ENCODE measurements at regions of chr3 and their contacts with region 1.

Region 1: DNA sequence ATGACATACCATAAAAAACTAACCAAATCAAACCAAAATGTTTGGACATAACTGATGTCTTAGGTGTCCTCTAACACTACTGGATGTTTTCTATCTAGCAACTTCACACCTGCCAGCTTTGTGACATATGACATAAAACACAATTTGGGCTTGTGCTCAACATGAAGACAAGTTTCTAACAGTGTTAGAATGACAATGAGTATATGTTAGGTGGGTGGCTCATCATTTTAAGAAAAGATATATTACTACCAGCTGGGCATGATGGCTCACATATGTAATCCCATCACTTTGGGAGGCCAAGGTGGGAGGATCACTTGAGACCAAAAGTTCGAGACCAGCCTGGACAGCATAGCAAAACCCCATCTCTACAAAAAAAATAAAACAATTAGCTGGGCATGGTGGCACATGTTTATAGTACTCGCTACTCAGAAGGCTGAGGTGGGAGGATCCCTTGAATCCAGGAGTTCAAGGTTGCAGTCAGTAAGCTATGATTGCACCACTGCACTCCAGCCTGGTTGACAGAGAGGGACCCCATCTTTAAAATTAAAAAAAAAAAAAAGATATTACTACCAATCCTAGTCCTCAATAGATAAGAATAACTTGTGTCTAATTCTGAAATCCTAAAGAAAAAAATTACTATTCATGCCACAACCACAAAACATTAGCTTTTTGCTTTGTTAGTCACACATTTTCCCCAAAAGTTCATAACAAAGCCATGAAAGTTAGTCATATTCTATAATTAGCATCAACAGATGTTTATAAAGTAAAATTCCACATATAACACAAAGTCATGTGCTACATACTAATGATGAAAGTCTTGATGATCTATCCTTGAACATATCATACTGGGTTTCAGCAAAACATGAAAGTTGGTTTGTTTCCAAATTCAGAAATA is 59.9 kb downstream of the LRRFIP2 start:
- DNase-seq: no peak
- H3K4me3 Mint-ChIP-seq: no peak overlapping the region
- H3K27ac Mint-ChIP-seq: no peak overlapping the region
- H3K4me1 Mint-ChIP-seq: peaks cover 19% of the 10 kb centered on the region
- H3K27me3 Mint-ChIP-seq: no peaks in the 10 kb centered on the region

Region 2: DNA sequence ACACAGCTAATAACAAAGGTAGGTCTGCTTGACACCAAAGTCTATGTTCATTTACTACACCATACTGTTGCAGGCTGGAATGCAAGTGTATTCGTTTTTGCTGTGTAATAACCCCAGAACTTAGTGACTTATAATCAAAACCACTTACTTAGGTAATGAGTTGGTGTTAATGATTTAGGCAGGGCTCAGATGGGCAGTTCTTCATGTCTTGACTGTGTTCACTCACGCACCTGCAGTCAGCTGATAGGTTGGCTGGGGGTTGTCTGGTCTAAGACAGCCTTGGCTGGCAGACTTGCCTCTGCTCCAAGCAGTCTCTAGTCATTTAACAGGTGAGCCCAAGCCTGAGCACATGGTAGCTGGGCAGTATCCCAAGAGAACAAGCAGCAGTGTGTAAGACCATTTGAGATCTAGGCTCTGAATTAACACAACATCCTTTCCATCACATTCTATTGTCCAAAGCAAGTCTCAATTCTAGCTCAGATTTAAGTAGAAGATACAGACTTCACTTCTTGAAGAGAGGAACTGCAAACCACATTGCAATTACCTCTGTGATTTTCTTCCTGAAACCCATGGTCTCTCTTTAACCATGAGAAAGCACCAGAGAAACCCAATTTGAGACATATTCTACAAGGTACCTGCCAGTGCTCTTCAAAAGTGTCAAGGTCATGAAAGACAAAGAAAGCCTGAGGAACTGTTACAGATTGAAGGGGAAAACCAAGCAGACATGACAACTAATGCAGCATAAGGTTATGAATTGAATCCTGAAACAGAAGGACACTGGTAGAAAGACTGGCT is 336.9 kb before region 1 on chr3:
- CTCF ChIA-PET with region 1: no interaction called
- POLR2A ChIA-PET with region 1: no interaction called
- intact Hi-C with region 1: no loop called
- DNase-seq: no peak
- H3K4me3 Mint-ChIP-seq: no peak overlapping the region
- H3K27ac Mint-ChIP-seq: no peak overlapping the region
- H3K4me1 Mint-ChIP-seq: no peaks in the 10 kb centered on the region
- H3K27me3 Mint-ChIP-seq: peaks cover 8% of the 10 kb centered on the region

Region 3: DNA sequence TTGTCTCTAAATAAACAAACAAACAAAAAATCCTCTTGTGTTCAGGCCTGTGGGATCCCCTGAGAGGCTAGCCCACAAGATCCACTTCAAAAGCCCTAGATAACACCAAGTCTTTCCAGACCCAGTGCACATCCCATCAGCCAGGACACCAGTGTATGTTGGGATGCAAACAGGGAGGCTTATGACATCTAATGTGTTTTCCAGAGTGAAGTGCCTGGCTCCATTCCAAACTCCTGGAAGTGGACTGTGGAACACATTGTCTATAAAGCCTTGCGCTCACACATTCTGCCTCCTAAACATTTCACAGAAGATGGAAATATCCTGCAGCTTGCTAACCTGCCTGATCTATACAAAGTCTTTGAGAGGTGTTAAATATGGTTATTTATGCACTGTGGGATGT is 64.2 kb before region 1 on chr3:
- CTCF ChIA-PET with region 1: no interaction called
- POLR2A ChIA-PET with region 1: no interaction called
- intact Hi-C with region 1: no loop called
- DNase-seq: no peak
- H3K4me3 Mint-ChIP-seq: no peak overlapping the region
- H3K27ac Mint-ChIP-seq: no peak overlapping the region
- H3K4me1 Mint-ChIP-seq: peaks cover 10% of the 10 kb centered on the region
- H3K27me3 Mint-ChIP-seq: no peaks in the 10 kb centered on the region

Region 4: DNA sequence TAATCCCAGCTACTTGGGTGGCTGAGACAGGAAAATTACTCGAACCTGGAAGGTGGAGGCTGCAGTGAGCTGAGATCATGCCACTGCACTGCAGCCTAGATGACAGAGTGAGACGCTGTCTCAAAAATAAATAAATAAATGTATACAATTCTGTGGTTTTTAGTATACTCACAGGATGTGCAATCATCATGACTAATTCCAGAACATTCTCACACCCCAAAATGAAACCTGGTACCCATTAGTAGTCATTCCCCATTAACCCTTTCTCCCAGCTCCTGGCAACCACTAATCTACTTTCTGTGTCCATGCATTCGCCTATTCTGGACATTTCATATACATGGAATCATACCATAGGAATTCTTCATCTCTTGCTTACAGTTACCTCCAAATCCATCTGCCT is 15.4 kb after region 1 on chr3:
- CTCF ChIA-PET with region 1: no interaction called
- POLR2A ChIA-PET with region 1: no interaction called
- intact Hi-C with region 1: loop called (anchors 2 kb)
- DNase-seq: peak; percentile 14
- H3K4me3 Mint-ChIP-seq: no peak overlapping the region
- H3K27ac Mint-ChIP-seq: no peak overlapping the region
- H3K4me1 Mint-ChIP-seq: peaks cover 18% of the 10 kb centered on the region
- H3K27me3 Mint-ChIP-seq: no peaks in the 10 kb centered on the region